ENCODE measurements at regions of chr10 and their contacts with region 1.

Region 1: DNA sequence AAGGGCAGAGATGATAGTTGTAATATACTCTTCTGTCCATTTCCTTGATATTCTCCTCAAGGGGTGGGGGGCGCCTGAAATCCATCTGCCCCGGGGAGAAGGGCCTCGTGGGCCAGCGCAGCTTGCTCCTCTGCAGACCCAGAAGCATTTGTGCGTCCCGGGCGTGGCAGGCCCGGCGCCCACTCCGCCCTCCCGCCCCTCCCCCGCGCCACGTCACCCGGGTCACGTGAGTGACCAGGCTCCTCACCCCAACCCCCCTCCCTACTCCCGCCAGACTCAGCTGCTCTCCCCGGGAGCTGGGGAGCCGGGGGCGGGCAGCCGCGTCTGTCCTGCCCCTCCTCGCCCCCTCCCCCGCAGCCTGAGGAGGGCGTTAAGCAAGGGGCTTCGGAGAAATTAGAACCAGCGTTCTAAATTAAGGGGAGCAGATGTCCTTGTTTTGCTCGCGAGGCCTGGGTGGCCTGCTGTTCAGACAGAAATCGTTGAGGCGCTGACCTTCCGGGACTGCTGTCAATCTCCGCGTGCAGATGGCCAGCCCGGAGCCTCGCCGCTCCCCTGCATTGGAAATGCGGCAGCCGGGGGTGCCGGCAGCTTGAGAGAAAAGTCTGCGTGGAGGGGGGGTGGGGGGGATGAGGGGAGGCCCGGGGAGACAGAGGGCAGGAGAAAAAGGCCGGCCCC is 102.1 kb upstream of the ZNF438 start:
- DNase-seq: peak; percentile 58
- H3K4me3 ChIP-seq: peak overlapping the region in 2 of 3 experiments; percentile 3 to 19
- H3K27ac ChIP-seq: peak overlapping the region; percentile 96
- H3K4me1 ChIP-seq: peaks cover 21% of the 10 kb centered on the region
- H3K27me3 ChIP-seq: no peaks in the 10 kb centered on the region
- CTCF ChIP-seq: no peak
- POLR2A ChIP-seq: no peak

Region 2: GRCh38 chr10:30812018-30812851 is 321.5 kb before region 1 on chr10:
- CTCF ChIA-PET with region 1: no interaction called
- POLR2A ChIA-PET with region 1: no interaction called
- dilution Hi-C with region 1: no loop called
- intact Hi-C with region 1: loop called (anchors 2 kb)
- DNase-seq: peak; percentile 96
- H3K4me3 ChIP-seq: no peak overlapping the region
- H3K27ac ChIP-seq: peak overlapping the region; percentile 96
- H3K4me1 ChIP-seq: peaks cover 54% of the 10 kb centered on the region
- H3K27me3 ChIP-seq: no peaks in the 10 kb centered on the region
- CTCF ChIP-seq: no peak
- POLR2A ChIP-seq: peak; percentile 29

Region 3: DNA sequence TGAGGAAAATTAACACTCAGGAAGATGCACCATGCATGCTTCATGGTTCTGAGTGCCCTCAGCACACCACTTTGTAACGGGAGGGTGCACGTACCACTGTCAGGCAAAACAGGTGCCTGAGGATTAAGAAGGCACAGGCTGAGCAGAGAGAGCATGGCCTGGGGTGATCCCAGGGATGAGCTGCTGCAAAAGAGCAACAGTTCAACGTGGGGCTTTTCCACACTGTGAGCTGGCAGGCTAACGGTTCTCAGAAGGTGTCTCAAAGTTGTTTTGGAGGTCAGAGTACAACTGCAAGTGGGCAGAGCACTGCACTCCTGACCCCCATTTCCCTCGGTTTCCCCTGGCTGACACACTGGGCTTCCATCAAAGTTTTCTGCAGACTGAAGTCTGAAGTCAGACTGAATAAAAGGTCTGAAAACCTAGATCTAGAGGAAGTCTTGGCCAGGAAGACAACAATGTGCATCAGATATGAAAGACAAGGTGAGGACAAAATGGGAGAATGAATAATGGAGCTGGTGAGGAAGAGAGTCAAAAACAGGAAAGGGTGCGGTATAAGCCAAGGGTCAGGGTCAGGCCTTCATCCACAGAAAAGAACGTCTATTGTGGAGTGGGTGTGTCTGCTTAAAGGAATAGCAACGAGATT is 122.6 kb before region 1 on chr10:
- CTCF ChIA-PET with region 1: interaction called, 4 read pairs
- POLR2A ChIA-PET with region 1: interaction called, 11 read pairs
- dilution Hi-C with region 1: no loop called
- intact Hi-C with region 1: loop called (anchors 10 kb)
- DNase-seq: peak; percentile 77
- H3K4me3 ChIP-seq: no peak overlapping the region
- H3K27ac ChIP-seq: peak overlapping the region; percentile 83
- H3K4me1 ChIP-seq: peaks cover 56% of the 10 kb centered on the region
- H3K27me3 ChIP-seq: no peaks in the 10 kb centered on the region
- CTCF ChIP-seq: no peak
- POLR2A ChIP-seq: peak; percentile 60

Region 4: GRCh38 chr10:31051703-31052102 is 82.1 kb before region 1 on chr10:
- CTCF ChIA-PET with region 1: no interaction called
- POLR2A ChIA-PET with region 1: no interaction called
- dilution Hi-C with region 1: no loop called
- intact Hi-C with region 1: loop called (anchors 1 kb)
- DNase-seq: peak; percentile 69
- H3K4me3 ChIP-seq: peak overlapping the region in 1 of 3 experiments; percentile 53
- H3K27ac ChIP-seq: peak overlapping the region; percentile 99
- H3K4me1 ChIP-seq: peaks cover 32% of the 10 kb centered on the region
- H3K27me3 ChIP-seq: no peaks in the 10 kb centered on the region
- CTCF ChIP-seq: no peak
- POLR2A ChIP-seq: no peak

Region 5: GRCh38 chr10:31083765-31084184 is 50.0 kb before region 1 on chr10:
- CTCF ChIA-PET with region 1: interaction called, 4 read pairs
- POLR2A ChIA-PET with region 1: no interaction called
- dilution Hi-C with region 1: no loop called
- intact Hi-C with region 1: loop called (anchors 5 kb)
- DNase-seq: peak; percentile 43
- H3K4me3 ChIP-seq: no peak overlapping the region
- H3K27ac ChIP-seq: no peak overlapping the region
- H3K4me1 ChIP-seq: no peaks in the 10 kb centered on the region
- H3K27me3 ChIP-seq: no peaks in the 10 kb centered on the region
- CTCF ChIP-seq: peak; percentile 42 to 54
- POLR2A ChIP-seq: no peak